Testis (tissue), 5 donors: ENCODE measurements at regions of chr3 and their contacts with region 1.

Region 1: DNA sequence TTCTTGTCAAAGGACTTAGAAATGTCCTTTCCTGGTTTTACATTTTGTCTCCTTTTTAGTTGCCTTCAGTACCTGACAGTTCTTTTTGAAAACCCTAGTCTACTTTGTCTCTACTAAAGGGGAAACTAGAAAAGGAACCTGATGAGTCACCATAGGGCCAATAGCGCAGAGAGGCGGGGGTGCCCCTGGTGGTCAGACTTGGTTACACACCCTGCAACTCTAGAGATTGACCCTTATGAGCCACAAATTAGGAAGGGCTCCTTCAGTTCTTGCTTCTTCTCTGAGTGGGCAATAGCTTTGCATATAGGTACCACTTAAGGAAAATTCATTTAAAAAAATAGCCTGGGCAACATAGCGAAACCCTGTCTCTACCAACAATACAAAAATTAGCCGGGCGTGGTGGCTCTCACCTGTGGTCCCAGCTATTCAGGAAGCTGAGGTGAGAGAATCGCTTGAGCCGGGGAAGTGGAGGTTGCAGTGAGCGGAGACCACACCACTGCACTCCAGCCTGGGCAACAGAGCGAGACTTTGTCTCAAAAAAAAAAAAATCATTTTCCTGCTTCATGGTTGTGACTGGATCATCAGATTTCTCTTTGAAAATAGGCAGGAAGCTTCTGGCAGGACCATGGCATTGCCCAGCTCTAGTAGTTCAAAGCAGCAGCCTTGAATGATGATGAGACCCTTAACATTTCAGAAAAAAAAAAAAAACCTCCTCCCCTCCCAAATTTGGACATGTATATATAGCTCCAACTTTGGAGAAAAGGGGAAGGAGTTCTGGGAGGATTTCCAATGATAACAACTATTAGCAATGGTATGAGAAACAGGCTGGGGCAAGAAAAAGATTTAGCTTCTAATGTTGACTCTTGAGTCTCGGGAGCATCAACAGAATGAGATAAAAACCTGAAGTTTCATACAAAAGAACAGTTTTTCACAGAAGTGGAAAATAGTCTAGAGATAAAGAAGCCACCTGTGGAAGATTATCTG is 45.2 kb upstream of the RASA2 start:
- DNase-seq: peak; percentile 58
- H3K4me3 ChIP-seq: no peak overlapping the region
- H3K27ac ChIP-seq: peak overlapping the region; percentile 56 to 90
- H3K4me1 ChIP-seq: peaks cover 26% of the 10 kb centered on the region
- H3K27me3 ChIP-seq: no peaks in the 10 kb centered on the region
- CTCF ChIP-seq: peak; percentile 64 to 82 (median 81)
- POLR2A ChIP-seq: no peak

Region 2: GRCh38 chr3:141368062-141368924 is 73.4 kb before region 1 on chr3 and contains the start of gene ZBTB38:
- intact Hi-C with region 1: loop called (anchors 5 kb)
- DNase-seq: peak; percentile 93
- H3K4me3 ChIP-seq: peak within 1 kb of the TSS; percentile 16 to 50
- H3K27ac ChIP-seq: peak within 1 kb of the TSS; percentile 93 to 95
- H3K4me1 ChIP-seq: peaks cover 47% of the 10 kb centered on the region
- H3K27me3 ChIP-seq: no peaks in the 10 kb centered on the region
- CTCF ChIP-seq: no peak
- POLR2A ChIP-seq: no peak
- total RNA-seq, gene ZBTB38: 131 to 167 TPM